Naive thymus-derived CD4-positive, alpha-beta T cell (primary cell): ENCODE measurements at regions of chr11 and their contacts with region 1.

Region 1: DNA sequence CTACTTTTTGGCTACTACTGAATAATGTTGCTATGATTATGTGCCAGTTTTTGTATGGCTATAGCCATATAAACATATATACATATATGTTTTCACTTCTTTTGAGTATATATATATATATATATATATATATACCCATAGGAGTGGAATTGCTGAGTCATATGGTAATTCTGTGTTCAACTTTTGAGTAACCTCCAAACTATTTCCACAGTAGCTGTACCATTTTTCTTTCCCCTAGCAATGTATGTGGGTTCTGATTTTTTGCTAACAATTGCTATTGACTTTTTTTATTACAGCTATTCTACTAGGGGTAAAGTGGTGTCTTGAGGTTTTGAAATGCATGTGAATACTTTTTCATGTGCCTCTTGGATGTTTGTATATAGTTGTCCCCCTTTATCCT is 30.4 kb downstream of the CBL start:
- DNase-seq: no peak
- ATAC-seq: no peak
- H3K4me3 ChIP-seq: no peak overlapping the region
- H3K4me3 Mint-ChIP-seq: no peak overlapping the region
- H3K27ac ChIP-seq: no peak overlapping the region
- H3K27ac Mint-ChIP-seq: peak overlapping the region in 5 of 9 donors; percentile 15 to 70 (median 26)
- H3K4me1 ChIP-seq: peaks cover 4 to 24% of the 10 kb centered on the region in 2 donors
- H3K4me1 Mint-ChIP-seq: peaks cover 29 to 74% (median 60%) of the 10 kb centered on the region in 7 donors
- H3K27me3 ChIP-seq: no peaks in the 10 kb centered on the region
- H3K27me3 Mint-ChIP-seq: no peaks in the 10 kb centered on the region

Region 2: GRCh38 chr11:119284344-119285157 is 48.1 kb after region 1 on chr11:
- CTCF ChIA-PET with region 1: interaction called, 10 read pairs
- POLR2A ChIA-PET with region 1: interaction called, 3 read pairs
- intact Hi-C with region 1: loop called in 1 of 2 experiments (anchors 2 kb)
- DNase-seq: peak in 7 of 9 donors; percentile 56 to 76 (median 68)
- ATAC-seq: peak; percentile 94
- H3K4me3 ChIP-seq: no peak overlapping the region
- H3K4me3 Mint-ChIP-seq: peak overlapping the region in 2 of 10 donors; percentile 23 to 51
- H3K27ac ChIP-seq: no peak overlapping the region
- H3K27ac Mint-ChIP-seq: peak overlapping the region; percentile 24 to 91 (median 55)
- H3K4me1 ChIP-seq: peaks cover 0 to 6% of the 10 kb centered on the region in 2 donors
- H3K4me1 Mint-ChIP-seq: peaks cover 17 to 56% (median 41%) of the 10 kb centered on the region in 7 donors
- H3K27me3 ChIP-seq: no peaks in the 10 kb centered on the region
- H3K27me3 Mint-ChIP-seq: no peaks in the 10 kb centered on the region